Posterior cingulate gyrus (tissue), 11 donors: ENCODE measurements at regions of chr12 and their contacts with region 1.

Region 1: GRCh38 chr12:12611512-12612306 is at the start of gene CREBL2:
- DNase-seq: peak; percentile 84 to 98 (median 91)

Region 2: DNA sequence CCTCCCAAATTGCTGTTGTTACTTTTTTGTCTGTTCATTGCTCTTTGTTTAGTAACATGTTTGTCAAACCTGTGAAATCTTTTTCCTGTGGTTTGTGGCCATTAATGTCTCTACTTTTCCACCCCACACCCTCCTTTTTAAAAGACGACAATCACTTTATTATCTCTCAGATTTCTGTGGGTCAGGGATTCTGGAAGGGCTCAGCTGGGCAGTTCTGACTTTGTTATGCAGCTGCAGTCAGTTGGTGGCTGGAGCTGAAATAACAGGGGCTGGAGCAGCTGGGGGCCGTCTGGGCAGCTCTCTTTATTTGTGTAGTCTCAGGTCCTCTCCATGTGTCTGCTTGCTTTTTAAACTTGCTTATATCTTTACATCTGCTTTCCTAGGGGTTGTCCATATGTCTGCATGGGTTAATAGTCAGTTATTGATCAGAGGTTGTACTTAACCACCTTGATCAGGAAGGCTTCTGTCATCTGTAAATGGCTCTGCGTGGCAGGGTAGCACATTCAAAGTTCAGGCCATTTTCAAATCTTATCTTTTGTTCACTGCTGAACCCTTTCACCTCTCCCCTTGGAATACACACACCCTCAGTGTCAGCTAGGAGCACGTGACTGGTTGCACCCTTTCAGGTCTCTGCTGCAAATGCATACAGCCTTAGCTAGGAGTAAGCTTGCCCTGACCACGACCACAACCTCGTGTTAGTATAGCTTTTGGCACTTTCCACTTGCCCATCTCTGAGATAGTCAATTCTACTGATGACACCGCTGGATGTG is 227.0 kb before region 1 on chr12:
- intact Hi-C with region 1: loop called (anchors 5 kb)
- DNase-seq: peak in 2 of 10 donors; percentile 14 to 30

Region 3: DNA sequence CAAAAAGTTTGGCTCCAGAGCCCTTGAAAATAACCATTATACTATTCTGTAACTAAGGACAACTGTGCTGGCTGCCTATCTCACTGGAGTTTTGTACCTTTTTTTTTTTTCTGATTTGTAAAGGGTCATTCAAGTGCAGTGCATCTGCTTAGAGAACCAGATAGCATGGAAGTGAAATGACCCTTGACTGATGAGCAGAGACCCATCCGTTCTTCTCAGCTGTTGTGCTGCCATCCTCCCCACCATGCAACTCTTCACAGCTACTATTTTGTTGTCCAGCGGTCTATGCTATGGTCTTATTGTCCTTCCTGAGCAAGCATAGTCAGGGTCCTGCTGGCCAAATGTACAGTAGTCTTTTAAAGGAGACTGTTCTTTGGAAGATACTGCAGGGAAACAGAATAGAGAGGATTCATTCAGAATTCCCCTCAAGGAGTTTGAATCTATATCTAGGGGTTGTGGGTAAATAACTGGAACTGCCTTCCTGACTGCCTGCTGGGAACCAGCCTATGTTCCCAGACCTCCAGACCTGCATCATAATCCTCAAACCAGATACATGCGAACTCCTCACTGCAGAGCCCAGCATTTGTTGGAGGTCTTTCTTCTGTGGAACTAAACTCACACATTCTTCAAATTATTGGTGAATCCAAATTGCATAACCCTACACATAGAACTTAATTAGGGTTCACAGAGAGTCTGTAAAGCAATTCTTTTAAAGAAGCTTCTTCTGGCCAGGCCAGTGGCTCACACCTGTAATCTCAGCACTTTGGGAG is 43.2 kb after region 1 on chr12:
- intact Hi-C with region 1: loop called (anchors 5 kb)
- DNase-seq: no peak

Region 4: GRCh38 chr12:12696562-12697383 is 85.1 kb after region 1 on chr12:
- intact Hi-C with region 1: loop called (anchors 5 kb)
- DNase-seq: peak; percentile 83 to 98 (median 90)

Region 5: GRCh38 chr12:13124661-13125505 is 513.2 kb after region 1 on chr12:
- intact Hi-C with region 1: no loop called
- DNase-seq: no peak